Activated naive CD4-positive, alpha-beta T cell treated with anti-CD3 and anti-CD28 coated beads, Interleukin-2, amount 10 ng/mL, durations not matched to agents 7 days and 5 days (primary cell): ENCODE measurements at regions of chr9 and their contacts with region 1.

Region 1: GRCh38 chr9:126490871-126491567 is 122.7 kb upstream of the LMX1B start:
- DNase-seq: peak; percentile 66
- H3K4me3 Mint-ChIP-seq: no peak overlapping the region
- H3K27ac Mint-ChIP-seq: no peak overlapping the region
- H3K4me1 Mint-ChIP-seq: peaks cover 13% of the 10 kb centered on the region
- H3K27me3 Mint-ChIP-seq: peaks cover 59% of the 10 kb centered on the region

Region 2: DNA sequence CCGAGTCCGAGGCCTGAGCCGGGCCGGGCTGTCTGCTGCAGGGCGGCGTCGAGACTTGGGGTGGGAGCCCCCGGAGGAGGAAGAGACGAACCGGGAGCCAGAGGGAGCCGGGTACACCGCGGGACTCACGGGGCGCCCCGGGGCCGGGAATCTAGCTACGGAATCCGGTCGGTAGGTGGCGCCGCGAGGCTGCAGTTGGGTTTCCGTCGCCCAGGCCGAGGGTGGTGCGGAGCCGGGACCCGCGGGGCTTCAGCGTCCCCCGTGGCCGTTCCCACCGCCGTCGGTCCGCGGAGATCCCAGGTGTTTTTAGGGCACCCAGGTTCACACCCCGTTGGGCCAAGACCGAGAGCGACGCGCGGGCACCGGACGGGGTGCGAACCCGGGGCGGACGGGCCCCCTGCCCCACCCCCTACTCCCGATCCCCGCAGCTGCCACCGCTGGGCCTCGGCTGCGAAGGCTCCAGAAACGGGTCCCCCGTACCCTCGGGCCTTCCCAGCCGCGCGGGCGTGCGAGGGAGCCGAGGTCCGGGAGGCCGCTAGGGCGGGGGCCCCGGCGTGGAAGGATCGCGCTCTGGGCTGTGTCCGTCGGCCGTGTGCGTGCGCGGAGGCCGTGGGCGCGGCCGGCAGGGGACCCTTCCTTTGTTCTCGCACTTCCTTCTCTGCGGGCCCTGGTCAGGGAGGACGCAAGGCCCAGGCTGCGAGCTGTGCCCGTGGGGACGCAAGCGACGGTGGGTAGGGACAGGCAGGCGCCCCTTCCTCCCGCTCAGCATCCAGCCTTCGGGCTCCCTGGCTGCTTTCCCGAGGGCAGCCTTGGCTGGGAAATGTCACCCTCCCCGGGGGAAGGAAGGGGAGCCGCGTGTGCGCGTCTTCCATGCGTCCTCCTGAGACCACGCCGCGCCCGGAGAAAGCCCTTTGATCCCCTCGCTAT is 1082.8 kb before region 1 on chr9:
- CTCF ChIA-PET with region 1: interaction called, 11 read pairs
- DNase-seq: peak; percentile 82
- H3K4me3 Mint-ChIP-seq: peak overlapping the region; percentile 61
- H3K27ac Mint-ChIP-seq: no peak overlapping the region
- H3K4me1 Mint-ChIP-seq: peaks cover 15% of the 10 kb centered on the region
- H3K27me3 Mint-ChIP-seq: peaks cover 58% of the 10 kb centered on the region

Region 3: DNA sequence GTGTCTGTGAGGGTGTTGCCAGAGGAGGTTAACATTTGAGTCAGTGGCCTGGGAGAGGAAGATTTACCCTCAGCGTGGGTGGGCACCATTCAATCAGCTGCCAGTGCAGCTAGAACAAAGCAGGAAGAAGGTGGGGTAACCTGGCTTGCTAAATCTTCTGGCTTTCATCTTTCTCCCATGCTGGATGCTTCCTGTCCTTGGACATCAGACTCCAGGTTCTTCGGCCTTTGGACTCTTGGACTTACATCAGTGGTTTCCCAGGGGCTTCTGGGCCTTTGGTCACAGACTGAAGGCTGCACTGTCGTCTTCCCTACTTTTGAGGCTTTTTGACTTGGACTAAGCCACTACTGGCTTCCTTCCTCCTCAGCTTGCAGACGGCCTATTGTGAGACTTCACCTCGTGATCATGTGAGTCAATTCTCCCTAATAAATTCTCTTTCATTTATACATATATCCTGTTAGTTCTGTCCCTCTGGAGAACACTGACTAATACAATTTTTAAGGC is 705.7 kb before region 1 on chr9:
- CTCF ChIA-PET with region 1: no interaction called
- DNase-seq: no peak
- H3K4me3 Mint-ChIP-seq: no peak overlapping the region
- H3K27ac Mint-ChIP-seq: no peak overlapping the region
- H3K4me1 Mint-ChIP-seq: peaks cover 14% of the 10 kb centered on the region
- H3K27me3 Mint-ChIP-seq: no peaks in the 10 kb centered on the region

Region 4: DNA sequence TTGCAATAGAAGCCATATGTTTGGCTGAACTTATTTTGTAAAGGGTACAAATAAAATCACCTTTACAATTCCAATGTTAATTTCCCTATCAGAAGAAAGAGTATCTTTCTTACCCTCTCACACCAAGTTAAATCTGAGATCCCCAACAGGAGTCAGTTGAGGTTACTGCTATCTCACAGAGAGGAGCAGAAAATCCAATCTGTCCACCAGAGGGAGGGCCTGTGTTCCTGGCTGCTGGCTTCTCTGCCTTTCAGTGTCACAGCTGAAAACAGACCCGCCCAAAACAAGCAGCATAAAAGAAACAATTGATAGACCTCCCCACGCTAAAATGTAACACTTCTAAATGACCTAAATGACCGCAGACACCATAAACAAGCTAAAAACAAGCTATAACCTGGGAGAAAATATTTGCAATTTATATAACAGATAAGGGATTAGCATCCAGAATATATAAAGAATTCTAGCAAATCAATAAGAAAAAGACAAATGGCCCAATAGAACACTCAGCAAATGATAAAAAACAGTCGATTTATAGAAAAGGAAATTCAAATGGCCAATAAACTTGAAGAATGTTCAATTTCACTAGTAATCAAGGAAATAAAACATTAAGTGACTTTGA is 188.9 kb before region 1 on chr9:
- CTCF ChIA-PET with region 1: interaction called, 20 read pairs
- DNase-seq: peak; percentile 76
- H3K4me3 Mint-ChIP-seq: no peak overlapping the region
- H3K27ac Mint-ChIP-seq: no peak overlapping the region
- H3K4me1 Mint-ChIP-seq: peaks cover 2% of the 10 kb centered on the region
- H3K27me3 Mint-ChIP-seq: peaks cover 29% of the 10 kb centered on the region

Region 5: DNA sequence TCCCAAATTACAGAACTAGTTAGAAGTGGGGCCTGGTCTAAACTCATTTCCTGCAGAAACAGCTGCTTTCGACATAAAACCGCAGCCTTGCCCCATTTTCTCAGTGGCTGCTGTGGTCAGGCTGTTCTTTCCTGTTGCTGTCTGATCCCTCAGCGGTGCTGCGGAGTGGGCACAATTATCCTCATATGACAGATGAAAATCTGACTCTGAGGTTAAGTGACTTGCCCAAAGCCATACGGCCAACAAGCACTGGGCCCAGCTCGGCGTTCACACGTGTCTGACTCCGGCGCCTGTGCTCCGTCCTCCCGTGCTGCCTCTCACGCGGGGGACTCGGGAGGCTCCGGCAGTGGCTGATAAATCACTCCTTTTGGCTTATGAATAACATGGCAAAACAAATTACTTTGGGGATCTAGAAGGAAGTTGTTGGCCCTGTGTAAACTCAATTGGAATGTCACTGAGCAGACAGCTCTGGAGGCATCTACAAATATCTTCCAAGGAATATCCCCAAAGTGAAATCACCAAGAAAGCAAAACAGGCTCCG is 19.9 kb before region 1 on chr9:
- CTCF ChIA-PET with region 1: interaction called, 17 read pairs
- DNase-seq: peak; percentile 90
- H3K4me3 Mint-ChIP-seq: peak overlapping the region; percentile 48
- H3K27ac Mint-ChIP-seq: peak overlapping the region; percentile 80
- H3K4me1 Mint-ChIP-seq: peaks cover 60% of the 10 kb centered on the region
- H3K27me3 Mint-ChIP-seq: peaks cover 70% of the 10 kb centered on the region